ENCODE measurements at regions of chr10 and their contacts with region 1.

Region 1: DNA sequence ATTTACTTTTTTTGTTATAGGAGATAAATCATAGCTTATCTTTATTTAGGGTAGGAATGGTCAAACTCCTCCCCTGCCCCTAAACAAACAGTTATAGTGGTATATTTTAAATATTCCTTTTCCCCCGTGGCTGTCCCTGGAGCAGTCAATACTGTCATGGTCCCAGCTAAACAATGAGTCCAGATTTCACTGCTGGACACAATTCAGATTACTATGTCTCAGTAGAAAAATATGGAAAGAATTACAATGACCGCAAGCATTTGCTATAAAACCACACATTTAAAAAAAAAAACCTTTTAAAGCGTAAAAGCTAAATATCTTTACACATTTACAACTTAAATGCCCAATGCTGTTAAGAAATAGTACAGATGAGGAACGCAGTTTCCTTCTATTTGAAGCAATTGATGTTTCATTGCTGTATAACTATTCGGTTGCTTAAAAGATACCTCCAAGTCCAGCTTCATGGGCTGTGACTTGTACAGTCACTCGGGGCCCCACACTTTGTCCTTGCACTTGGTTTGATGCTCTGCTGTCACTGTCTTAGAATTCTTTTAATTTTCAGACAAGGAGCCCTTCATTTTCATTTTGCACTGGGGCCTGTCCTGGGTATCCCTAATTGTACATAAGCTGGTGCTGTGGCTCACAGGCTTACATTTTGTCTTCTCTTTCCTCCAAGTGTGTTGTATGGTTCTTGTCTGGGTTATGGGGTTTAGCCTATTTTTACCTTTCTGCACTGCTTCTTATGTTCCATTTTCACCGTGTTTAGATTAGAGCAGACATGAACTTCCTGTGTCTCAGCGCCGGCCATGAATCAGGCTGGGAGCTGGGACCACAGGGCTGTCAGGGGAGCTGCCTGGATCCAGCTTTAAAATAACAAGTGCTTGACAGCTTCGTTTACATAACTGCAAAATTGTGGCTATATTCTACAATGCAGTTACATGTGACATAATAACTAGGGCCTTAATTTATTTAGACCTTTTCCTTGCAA is 530.2 kb upstream of the FZD8 start:
- DNase-seq: peak; percentile 99
- ATAC-seq: peak; percentile 71
- H3K4me3 ChIP-seq: peak overlapping the region; percentile 28
- H3K27ac ChIP-seq: peak overlapping the region; percentile 79
- H3K4me1 ChIP-seq: peaks cover 43% of the 10 kb centered on the region
- H3K27me3 ChIP-seq: no peaks in the 10 kb centered on the region
- CTCF ChIP-seq: no peak

Region 2: GRCh38 chr10:35642027-35642792 is 530.0 kb before region 1 on chr10 and contains the start of gene FZD8:
- CTCF ChIA-PET with region 1: interaction called, 7 read pairs
- POLR2A ChIA-PET with region 1: no interaction called
- intact Hi-C with region 1: loop called (anchors 1 kb)
- DNase-seq: peak; percentile 100
- ATAC-seq: peak; percentile 73
- H3K4me3 ChIP-seq: peak within 1 kb of the TSS; percentile 80
- H3K27ac ChIP-seq: peak within 1 kb of the TSS; percentile 62
- H3K4me1 ChIP-seq: peaks cover 30% of the 10 kb centered on the region
- H3K27me3 ChIP-seq: no peaks in the 10 kb centered on the region
- CTCF ChIP-seq: peak; percentile 60; the same call in 1 of the 2 replicates
- total RNA-seq, gene FZD8: 275 and 375 TPM in 2 replicates

Region 3: DNA sequence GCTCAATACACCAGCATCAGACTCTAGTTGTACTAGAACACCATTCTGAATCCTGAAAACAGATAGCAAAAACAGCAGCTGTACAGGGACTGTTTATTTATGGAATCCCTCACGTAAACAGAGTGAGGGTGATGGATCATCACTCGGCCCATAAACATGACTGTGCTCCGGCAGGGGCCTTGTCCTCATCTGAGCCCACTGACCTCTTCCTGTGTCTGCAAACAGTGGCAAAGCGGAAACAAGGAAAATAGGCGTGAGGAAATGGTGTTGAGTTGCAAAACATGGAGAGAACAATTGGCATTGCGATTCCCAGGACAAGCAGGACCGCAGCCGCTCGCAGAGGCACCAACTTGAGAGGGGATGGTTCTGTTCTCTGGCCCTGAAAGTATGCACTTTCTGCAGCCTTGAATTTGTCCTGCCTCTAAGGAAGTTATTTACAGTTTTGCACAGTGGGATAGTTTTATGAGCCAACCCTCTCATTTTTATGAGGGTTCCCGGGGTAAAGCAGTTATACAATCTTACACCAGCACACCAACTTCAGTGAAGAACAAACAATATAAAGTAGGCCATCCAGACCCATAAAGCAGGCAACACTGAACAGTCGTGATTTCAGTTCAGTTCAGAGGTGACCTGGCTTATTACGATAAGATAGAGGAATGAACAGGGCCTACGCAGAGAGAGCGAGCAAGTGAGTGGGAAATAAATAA is 282.1 kb before region 1 on chr10:
- CTCF ChIA-PET with region 1: no interaction called
- POLR2A ChIA-PET with region 1: no interaction called
- intact Hi-C with region 1: loop called (anchors 1 kb)
- DNase-seq: peak; percentile 74
- ATAC-seq: peak; percentile 90
- H3K4me3 ChIP-seq: no peak overlapping the region
- H3K27ac ChIP-seq: peak overlapping the region; percentile 38
- H3K4me1 ChIP-seq: peaks cover 25% of the 10 kb centered on the region
- H3K27me3 ChIP-seq: no peaks in the 10 kb centered on the region
- CTCF ChIP-seq: no peak

Region 4: DNA sequence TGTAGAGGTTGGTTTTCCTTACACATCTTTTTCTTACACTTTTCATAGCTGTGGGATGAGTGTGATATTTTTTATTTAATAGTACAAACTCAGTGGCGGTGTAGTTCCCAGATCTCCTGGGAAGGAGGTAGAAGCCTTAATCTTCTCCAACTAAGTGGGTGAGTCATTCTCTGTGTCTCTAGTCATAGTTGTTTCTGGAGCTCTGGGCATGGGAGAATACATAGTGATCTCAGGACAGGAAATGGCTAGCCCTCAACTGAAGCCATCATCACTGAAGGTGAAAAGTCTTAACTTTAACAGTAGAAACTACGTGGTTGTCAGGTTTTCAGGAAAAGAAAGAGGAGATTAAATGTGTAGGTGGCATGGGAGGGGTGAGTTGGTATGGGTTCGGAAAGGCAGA is 210.7 kb before region 1 on chr10:
- CTCF ChIA-PET with region 1: no interaction called
- POLR2A ChIA-PET with region 1: no interaction called
- intact Hi-C with region 1: no loop called
- DNase-seq: peak; percentile 71
- ATAC-seq: peak; percentile 89
- H3K4me3 ChIP-seq: no peak overlapping the region
- H3K27ac ChIP-seq: no peak overlapping the region
- H3K4me1 ChIP-seq: no peaks in the 10 kb centered on the region
- H3K27me3 ChIP-seq: no peaks in the 10 kb centered on the region
- CTCF ChIP-seq: no peak

Region 5: DNA sequence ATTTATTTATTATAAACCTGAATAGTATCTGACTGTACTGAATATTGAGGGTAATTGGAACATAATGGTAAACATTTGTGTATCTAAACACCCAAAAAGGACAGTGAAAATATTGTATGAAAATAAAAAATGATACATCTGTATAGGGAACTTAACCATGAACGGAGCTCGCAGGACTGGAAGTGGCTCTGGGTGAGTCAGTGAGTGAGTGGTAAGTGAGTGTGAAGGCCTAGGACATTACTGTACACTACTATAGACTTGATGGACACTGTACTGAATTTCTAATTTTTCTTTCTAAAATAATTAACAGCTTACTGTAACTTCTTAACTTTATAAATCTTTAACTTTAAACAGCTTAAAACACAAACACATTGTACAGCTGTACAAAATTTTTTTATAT is 75.7 kb before region 1 on chr10:
- CTCF ChIA-PET with region 1: no interaction called
- POLR2A ChIA-PET with region 1: interaction called, 4 read pairs
- intact Hi-C with region 1: loop called (anchors 1 kb)
- DNase-seq: peak; percentile 97
- ATAC-seq: peak; percentile 71
- H3K4me3 ChIP-seq: no peak overlapping the region
- H3K27ac ChIP-seq: peak overlapping the region; percentile 58
- H3K4me1 ChIP-seq: peaks cover 29% of the 10 kb centered on the region
- H3K27me3 ChIP-seq: no peaks in the 10 kb centered on the region
- CTCF ChIP-seq: no peak

Region 6: DNA sequence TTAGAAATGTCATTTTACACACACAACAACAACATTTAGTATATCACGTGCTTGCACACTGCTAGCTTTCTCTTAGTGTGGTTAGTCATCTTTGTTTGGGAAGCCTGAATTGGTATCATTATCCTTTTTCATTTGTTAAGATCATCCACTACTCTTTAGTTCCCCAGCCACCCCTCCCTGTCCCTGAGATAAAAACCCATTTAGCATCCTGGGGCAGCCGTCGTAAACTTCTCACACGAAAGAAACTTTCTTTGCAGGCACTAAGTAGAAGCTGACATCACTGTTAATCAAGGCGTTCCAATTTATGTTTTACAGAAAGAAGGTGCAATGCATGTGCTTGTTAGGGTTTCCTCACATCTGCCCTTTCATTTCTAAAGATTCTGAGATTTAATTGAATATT is 55.0 kb before region 1 on chr10:
- CTCF ChIA-PET with region 1: no interaction called
- POLR2A ChIA-PET with region 1: no interaction called
- intact Hi-C with region 1: no loop called
- DNase-seq: no peak
- ATAC-seq: no peak
- H3K4me3 ChIP-seq: no peak overlapping the region
- H3K27ac ChIP-seq: no peak overlapping the region
- H3K4me1 ChIP-seq: peaks cover 15% of the 10 kb centered on the region
- H3K27me3 ChIP-seq: no peaks in the 10 kb centered on the region
- CTCF ChIP-seq: no peak

Region 7: DNA sequence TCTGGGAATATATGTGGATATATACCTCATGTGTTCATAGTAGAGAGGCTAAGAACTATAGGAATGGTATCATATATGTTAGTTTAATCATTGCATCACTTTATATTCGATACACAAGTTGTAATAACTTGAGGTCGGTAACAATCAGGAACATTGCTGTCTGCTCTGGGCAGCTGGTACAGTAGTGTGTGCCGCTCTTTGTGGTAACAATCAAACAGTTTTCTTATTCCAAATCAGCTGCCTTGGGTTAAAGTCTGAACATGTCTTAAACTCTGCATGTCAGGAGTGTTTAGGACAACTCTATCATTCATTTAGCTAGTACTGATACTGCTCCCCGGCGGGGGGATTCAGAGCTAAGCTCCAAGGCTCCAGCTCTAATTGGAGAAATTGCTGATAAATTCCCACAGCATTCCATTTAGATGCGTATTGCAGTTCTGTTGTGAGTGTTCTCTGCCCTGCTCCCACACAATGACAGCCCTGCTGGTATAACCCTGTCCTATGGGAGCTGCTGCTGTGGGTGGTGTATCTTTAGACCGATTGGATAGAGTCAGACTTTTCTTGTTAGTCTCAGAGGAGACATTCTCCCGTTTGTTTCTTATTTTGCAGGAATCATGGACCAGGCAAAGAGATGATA is 177.3 kb after region 1 on chr10:
- CTCF ChIA-PET with region 1: no interaction called
- POLR2A ChIA-PET with region 1: no interaction called
- intact Hi-C with region 1: no loop called
- DNase-seq: no peak
- ATAC-seq: 0 out of 2 replicates have a peak, but pooled peaks have one; percentile 26
- H3K4me3 ChIP-seq: no peak overlapping the region
- H3K27ac ChIP-seq: no peak overlapping the region
- H3K4me1 ChIP-seq: peaks cover 14% of the 10 kb centered on the region
- H3K27me3 ChIP-seq: no peaks in the 10 kb centered on the region
- CTCF ChIP-seq: no peak

Region 8: GRCh38 chr10:36393801-36394200 is 221.6 kb after region 1 on chr10:
- CTCF ChIA-PET with region 1: interaction called, 3 read pairs
- POLR2A ChIA-PET with region 1: no interaction called
- intact Hi-C with region 1: loop called (anchors 1 kb)
- DNase-seq: peak; percentile 99
- ATAC-seq: peak; percentile 88
- H3K4me3 ChIP-seq: no peak overlapping the region
- H3K27ac ChIP-seq: peak overlapping the region; percentile 21
- H3K4me1 ChIP-seq: peaks cover 13% of the 10 kb centered on the region
- H3K27me3 ChIP-seq: no peaks in the 10 kb centered on the region
- CTCF ChIP-seq: no peak

Region 9: GRCh38 chr10:36602374-36602773 is 430.1 kb after region 1 on chr10:
- CTCF ChIA-PET with region 1: no interaction called
- POLR2A ChIA-PET with region 1: no interaction called
- intact Hi-C with region 1: loop called (anchors 1 kb)
- DNase-seq: peak; percentile 98
- ATAC-seq: peak; percentile 71
- H3K4me3 ChIP-seq: peak overlapping the region; percentile 2; the same call in 1 of the 2 replicates
- H3K27ac ChIP-seq: peak overlapping the region; percentile 30
- H3K4me1 ChIP-seq: peaks cover 47% of the 10 kb centered on the region
- H3K27me3 ChIP-seq: no peaks in the 10 kb centered on the region
- CTCF ChIP-seq: no peak

Region 10: DNA sequence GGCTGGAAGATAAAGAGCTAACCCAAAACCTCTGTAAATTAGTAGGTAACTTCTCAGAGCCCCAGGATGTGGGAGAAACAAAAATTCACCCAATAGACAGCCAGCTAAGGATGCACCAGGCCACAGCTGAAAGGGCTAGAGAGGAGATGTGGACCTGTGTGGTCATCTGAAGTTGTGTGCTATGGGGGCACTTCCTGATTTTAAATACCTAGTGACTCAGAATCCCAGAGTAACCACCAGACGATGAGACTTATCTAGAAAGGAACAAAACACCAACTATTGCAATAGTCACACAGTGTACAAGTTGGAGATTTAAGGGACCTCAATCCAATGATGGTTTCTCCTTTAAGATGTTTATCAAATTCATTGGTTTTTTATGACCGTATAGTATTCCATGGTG is 544.9 kb after region 1 on chr10:
- CTCF ChIA-PET with region 1: no interaction called
- POLR2A ChIA-PET with region 1: no interaction called
- intact Hi-C with region 1: loop called (anchors 1 kb)
- DNase-seq: peak; percentile 82
- ATAC-seq: peak; percentile 69
- H3K4me3 ChIP-seq: no peak overlapping the region
- H3K27ac ChIP-seq: peak overlapping the region; percentile 80
- H3K4me1 ChIP-seq: peaks cover 40% of the 10 kb centered on the region
- H3K27me3 ChIP-seq: no peaks in the 10 kb centered on the region
- CTCF ChIP-seq: no peak